B cell (primary cell): ENCODE measurements at regions of chr9 and their contacts with region 1.

Region 1: DNA sequence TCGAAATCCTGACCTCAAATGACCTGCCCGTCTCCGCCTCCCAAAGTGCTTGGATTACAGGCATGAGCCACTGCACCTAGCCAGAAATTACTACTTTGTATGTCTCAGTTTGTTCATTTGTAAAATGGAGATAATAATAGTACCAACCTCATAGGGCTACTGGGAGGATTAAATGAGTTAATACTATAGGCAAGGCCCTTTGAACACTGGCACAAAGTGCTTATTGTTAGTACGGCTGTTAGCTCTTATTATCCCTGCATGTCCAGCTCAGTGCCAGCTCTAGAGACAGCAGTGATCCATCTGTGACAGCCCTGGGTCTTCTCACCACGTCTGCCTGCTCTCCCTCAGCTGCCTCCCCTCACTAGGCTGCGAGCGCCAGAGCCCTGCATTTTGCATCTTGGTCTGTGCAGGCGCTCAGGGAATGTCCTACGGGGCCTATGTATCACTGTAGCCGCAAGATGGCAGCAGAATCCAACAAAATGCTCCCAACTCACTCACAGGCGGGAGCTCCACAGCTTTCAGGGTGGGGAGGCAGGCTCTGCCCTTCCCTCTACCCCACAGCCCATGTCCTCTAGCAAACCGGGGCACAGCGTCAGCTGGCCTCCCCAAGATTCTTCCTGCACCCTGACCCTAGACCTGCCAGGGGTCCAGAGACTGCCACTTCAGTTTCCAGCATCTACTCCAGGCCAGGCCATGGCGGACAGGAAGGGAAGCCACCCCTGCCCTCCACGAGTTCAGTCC is 17.7 kb upstream of the AKNA start:
- DNase-seq: peak; percentile 89
- ATAC-seq: peak; percentile 99
- H3K4me3 ChIP-seq: no peak overlapping the region
- H3K4me3 Mint-ChIP-seq: no peak overlapping the region
- H3K27ac ChIP-seq: no peak overlapping the region
- H3K27ac Mint-ChIP-seq: peak overlapping the region; percentile 8
- H3K4me1 ChIP-seq: peaks cover 8 to 9% of the 10 kb centered on the region in 2 donors
- H3K4me1 Mint-ChIP-seq: peaks cover 4% of the 10 kb centered on the region
- H3K27me3 ChIP-seq: no peaks in the 10 kb centered on the region
- H3K27me3 Mint-ChIP-seq: no peaks in the 10 kb centered on the region
- CTCF ChIP-seq: peak; percentile 87

Region 2: DNA sequence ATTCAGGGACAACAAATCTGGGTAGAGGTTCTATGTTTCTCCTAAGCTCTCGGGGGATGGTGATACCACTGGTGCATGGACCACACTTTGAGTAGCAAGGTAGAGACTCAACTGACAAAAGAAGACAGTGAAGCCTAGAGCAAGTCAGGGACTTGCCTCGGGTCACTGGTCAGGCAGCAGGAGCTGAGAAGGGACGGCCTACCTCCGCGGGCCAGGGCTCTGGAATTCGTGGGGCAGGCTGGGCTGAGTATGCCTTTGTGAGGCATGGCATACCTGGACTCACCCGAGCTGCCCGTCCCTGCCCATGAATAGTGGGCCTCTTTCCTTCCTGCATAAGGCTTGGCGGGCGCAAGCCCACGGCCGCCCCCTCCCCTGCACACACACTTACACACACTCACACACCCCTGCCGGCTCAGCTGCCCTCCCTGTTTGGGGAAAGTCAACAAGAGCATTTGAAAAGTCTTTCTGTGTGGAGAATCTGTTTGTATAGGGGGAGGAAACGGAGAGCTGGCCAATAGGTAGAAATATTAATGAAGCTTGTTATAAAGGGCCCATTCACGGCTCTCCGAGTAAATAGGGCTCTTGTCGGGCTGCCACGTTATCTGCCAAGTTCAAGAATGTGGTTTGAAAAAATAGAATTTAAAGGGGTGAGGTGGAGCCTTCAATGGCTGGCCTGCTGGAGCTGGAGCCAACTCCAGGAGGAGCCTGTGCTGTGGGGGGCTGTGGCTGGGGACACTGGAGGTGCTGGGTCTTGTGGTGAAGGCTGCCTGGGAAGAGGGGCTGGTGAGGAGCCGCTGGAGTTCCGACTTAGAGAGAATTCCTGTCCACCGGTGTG is 287.3 kb before region 1 on chr9:
- CTCF ChIA-PET with region 1: no interaction called
- POLR2A ChIA-PET with region 1: no interaction called
- intact Hi-C with region 1: no loop called
- DNase-seq: no peak
- ATAC-seq: no peak
- H3K4me3 ChIP-seq: no peak overlapping the region
- H3K4me3 Mint-ChIP-seq: no peak overlapping the region
- H3K27ac ChIP-seq: no peak overlapping the region
- H3K27ac Mint-ChIP-seq: no peak overlapping the region
- H3K4me1 ChIP-seq: no peaks in the 10 kb centered on the region
- H3K4me1 Mint-ChIP-seq: no peaks in the 10 kb centered on the region
- H3K27me3 ChIP-seq: peaks cover 0 to 9% (median 0%) of the 10 kb centered on the region in 4 experiments
- H3K27me3 Mint-ChIP-seq: peaks cover 34% of the 10 kb centered on the region
- CTCF ChIP-seq: no peak

Region 3: DNA sequence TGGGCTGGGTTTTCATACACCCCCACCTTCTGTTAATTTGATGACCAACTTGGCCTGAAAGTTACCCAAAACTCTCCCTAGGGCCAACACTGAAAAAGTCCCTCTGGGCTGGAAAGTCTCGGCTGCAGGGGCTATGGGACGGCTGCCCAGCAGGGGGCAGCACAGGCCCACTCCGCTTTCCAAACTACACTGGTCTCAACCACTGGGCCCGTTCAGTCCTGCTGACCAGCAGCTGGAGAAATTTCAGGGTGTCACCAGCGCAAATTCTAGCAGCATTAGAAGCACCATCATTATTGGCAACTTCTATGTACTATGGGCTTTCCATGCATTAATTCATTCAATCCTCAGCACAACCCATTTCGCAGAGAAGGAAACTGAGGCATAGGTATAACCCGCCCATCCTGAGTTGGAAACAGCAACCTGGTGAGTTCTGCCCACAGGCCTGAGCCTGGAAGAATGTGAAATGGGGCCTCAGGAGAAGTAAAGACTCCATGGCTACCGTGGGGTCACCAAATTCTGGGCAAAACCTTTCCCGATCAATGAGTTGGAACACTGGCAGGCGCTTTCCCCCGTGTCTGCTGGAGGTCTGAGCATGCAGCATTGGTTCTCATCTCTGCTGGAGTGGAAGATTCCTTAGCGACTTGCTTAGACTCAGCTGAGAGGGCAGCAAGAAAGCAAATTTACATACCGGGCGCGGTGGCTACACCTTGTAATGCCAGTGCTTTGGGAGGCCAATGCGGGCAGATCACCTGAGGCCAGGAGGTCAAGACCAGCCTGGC is 66.1 kb before region 1 on chr9:
- CTCF ChIA-PET with region 1: interaction called, 91 read pairs
- POLR2A ChIA-PET with region 1: no interaction called
- intact Hi-C with region 1: no loop called
- DNase-seq: peak; percentile 74
- ATAC-seq: peak; percentile 68
- H3K4me3 ChIP-seq: no peak overlapping the region
- H3K4me3 Mint-ChIP-seq: no peak overlapping the region
- H3K27ac ChIP-seq: peak overlapping the region in 1 of 2 donors; percentile 71
- H3K27ac Mint-ChIP-seq: peak overlapping the region; percentile 80
- H3K4me1 ChIP-seq: peaks cover 0 to 17% of the 10 kb centered on the region in 2 donors
- H3K4me1 Mint-ChIP-seq: peaks cover 37% of the 10 kb centered on the region
- H3K27me3 ChIP-seq: no peaks in the 10 kb centered on the region
- H3K27me3 Mint-ChIP-seq: no peaks in the 10 kb centered on the region
- CTCF ChIP-seq: peak; percentile 91

Region 4: GRCh38 chr9:114434878-114435311 is 29.4 kb after region 1 on chr9:
- CTCF ChIA-PET with region 1: interaction called, 41 read pairs
- POLR2A ChIA-PET with region 1: no interaction called
- intact Hi-C with region 1: no loop called
- DNase-seq: peak; percentile 70
- ATAC-seq: peak; percentile 76
- H3K4me3 ChIP-seq: no peak overlapping the region
- H3K4me3 Mint-ChIP-seq: no peak overlapping the region
- H3K27ac ChIP-seq: no peak overlapping the region
- H3K27ac Mint-ChIP-seq: no peak overlapping the region
- H3K4me1 ChIP-seq: no peaks in the 10 kb centered on the region
- H3K4me1 Mint-ChIP-seq: peaks cover 2% of the 10 kb centered on the region
- H3K27me3 ChIP-seq: peaks cover 0 to under 1% (median 0%) of the 10 kb centered on the region in 4 experiments
- H3K27me3 Mint-ChIP-seq: peaks cover 5% of the 10 kb centered on the region
- CTCF ChIP-seq: peak; percentile 72

Region 5: GRCh38 chr9:114511968-114512874 is 106.8 kb after region 1 on chr9:
- CTCF ChIA-PET with region 1: interaction called, 89 read pairs
- POLR2A ChIA-PET with region 1: no interaction called
- intact Hi-C with region 1: no loop called
- DNase-seq: no peak
- ATAC-seq: no peak
- H3K4me3 ChIP-seq: no peak overlapping the region
- H3K4me3 Mint-ChIP-seq: no peak overlapping the region
- H3K27ac ChIP-seq: no peak overlapping the region
- H3K27ac Mint-ChIP-seq: no peak overlapping the region
- H3K4me1 ChIP-seq: peaks cover 19 to 20% of the 10 kb centered on the region in 2 donors
- H3K4me1 Mint-ChIP-seq: peaks cover 23% of the 10 kb centered on the region
- H3K27me3 ChIP-seq: peaks cover 0 to 9% (median 5%) of the 10 kb centered on the region in 4 experiments
- H3K27me3 Mint-ChIP-seq: peaks cover 42% of the 10 kb centered on the region
- CTCF ChIP-seq: no peak

Region 6: GRCh38 chr9:114616653-114617520 is 211.4 kb after region 1 on chr9:
- CTCF ChIA-PET with region 1: interaction called, 12 read pairs
- POLR2A ChIA-PET with region 1: no interaction called
- intact Hi-C with region 1: no loop called
- DNase-seq: peak; percentile 88
- ATAC-seq: peak; percentile 80
- H3K4me3 ChIP-seq: peak overlapping the region in 1 of 5 experiments; percentile 18
- H3K4me3 Mint-ChIP-seq: peak overlapping the region; percentile 79
- H3K27ac ChIP-seq: peak overlapping the region; percentile 81 to 89
- H3K27ac Mint-ChIP-seq: peak overlapping the region; percentile 98
- H3K4me1 ChIP-seq: peaks cover 74 to 94% of the 10 kb centered on the region in 2 donors
- H3K4me1 Mint-ChIP-seq: peaks cover 72% of the 10 kb centered on the region
- H3K27me3 ChIP-seq: no peaks in the 10 kb centered on the region
- H3K27me3 Mint-ChIP-seq: no peaks in the 10 kb centered on the region
- CTCF ChIP-seq: no peak

Region 7: DNA sequence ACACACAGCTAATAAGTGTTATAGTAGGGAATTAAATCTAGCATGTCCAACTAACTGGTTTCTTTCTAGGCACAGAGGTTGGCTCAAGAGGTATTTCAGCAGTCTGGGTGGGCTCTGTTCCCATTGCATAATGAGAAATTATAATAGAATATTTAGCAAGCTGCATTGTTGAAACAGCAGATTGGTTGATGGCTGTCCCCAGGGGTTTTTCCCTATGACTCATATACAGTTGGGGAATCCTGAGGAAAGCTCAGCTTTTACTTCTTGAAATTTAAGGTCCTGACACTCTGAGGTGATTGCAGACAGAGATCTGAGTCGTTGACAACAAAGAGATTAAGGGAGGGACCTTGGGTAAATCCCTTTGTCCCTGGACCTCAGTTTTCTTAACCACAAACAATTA is 563.2 kb after region 1 on chr9:
- CTCF ChIA-PET with region 1: no interaction called
- POLR2A ChIA-PET with region 1: no interaction called
- intact Hi-C with region 1: no loop called
- DNase-seq: no peak
- ATAC-seq: no peak
- H3K4me3 ChIP-seq: no peak overlapping the region
- H3K4me3 Mint-ChIP-seq: no peak overlapping the region
- H3K27ac ChIP-seq: no peak overlapping the region
- H3K27ac Mint-ChIP-seq: no peak overlapping the region
- H3K4me1 ChIP-seq: no peaks in the 10 kb centered on the region
- H3K4me1 Mint-ChIP-seq: no peaks in the 10 kb centered on the region
- H3K27me3 ChIP-seq: no peaks in the 10 kb centered on the region
- H3K27me3 Mint-ChIP-seq: peaks cover 7% of the 10 kb centered on the region
- CTCF ChIP-seq: no peak

Region 8: DNA sequence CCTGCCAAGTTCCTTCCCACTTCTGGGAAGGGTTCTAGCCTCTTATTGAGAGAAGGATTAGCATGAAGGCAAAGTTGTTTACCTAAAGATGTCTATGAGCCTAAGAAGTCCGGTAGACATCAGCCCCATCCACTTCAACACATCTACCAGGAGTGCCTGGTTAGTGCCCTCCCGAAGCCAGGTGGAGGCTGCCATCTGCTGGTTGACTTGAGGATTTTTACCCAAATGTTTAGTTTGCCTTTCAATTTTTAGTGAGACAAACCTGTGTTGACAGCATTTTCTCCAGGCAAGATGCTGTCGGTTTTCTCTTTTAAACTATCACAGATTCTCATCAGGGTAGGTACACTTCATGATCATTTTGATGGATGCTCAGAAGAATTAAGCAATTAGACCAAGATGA is 608.5 kb after region 1 on chr9:
- CTCF ChIA-PET with region 1: interaction called, 40 read pairs
- POLR2A ChIA-PET with region 1: no interaction called
- intact Hi-C with region 1: loop called (anchors 1 kb)
- DNase-seq: peak; percentile 81
- ATAC-seq: peak; percentile 65
- H3K4me3 ChIP-seq: no peak overlapping the region
- H3K4me3 Mint-ChIP-seq: no peak overlapping the region
- H3K27ac ChIP-seq: no peak overlapping the region
- H3K27ac Mint-ChIP-seq: no peak overlapping the region
- H3K4me1 ChIP-seq: no peaks in the 10 kb centered on the region
- H3K4me1 Mint-ChIP-seq: peaks cover 3% of the 10 kb centered on the region
- H3K27me3 ChIP-seq: no peaks in the 10 kb centered on the region
- H3K27me3 Mint-ChIP-seq: peaks cover 24% of the 10 kb centered on the region
- CTCF ChIP-seq: peak; percentile 91